Activated CD8-positive, alpha-beta T cell treated with anti-CD3 and anti-CD28 coated beads for 36 hours (primary cell): ENCODE measurements at regions of chr7 and their contacts with region 1.

Region 1: GRCh38 chr7:5665094-5666025 is 116.1 kb downstream of the RNF216 start:
- DNase-seq: peak; percentile 77
- ATAC-seq: peak; percentile 80
- H3K4me3 Mint-ChIP-seq: no peak overlapping the region
- H3K27ac Mint-ChIP-seq: peak overlapping the region; percentile 20
- H3K4me1 Mint-ChIP-seq: peaks cover 31% of the 10 kb centered on the region
- H3K27me3 Mint-ChIP-seq: no peaks in the 10 kb centered on the region
- CTCF ChIP-seq: peak; percentile 81

Region 2: GRCh38 chr7:5541087-5541992 is 124.0 kb before region 1 on chr7:
- CTCF ChIA-PET with region 1: no interaction called
- POLR2A ChIA-PET with region 1: no interaction called
- intact Hi-C with region 1: no loop called
- DNase-seq: no peak
- ATAC-seq: no peak
- H3K4me3 Mint-ChIP-seq: no peak overlapping the region
- H3K27ac Mint-ChIP-seq: no peak overlapping the region
- H3K4me1 Mint-ChIP-seq: peaks cover 12% of the 10 kb centered on the region
- H3K27me3 Mint-ChIP-seq: no peaks in the 10 kb centered on the region
- CTCF ChIP-seq: no peak

Region 3: DNA sequence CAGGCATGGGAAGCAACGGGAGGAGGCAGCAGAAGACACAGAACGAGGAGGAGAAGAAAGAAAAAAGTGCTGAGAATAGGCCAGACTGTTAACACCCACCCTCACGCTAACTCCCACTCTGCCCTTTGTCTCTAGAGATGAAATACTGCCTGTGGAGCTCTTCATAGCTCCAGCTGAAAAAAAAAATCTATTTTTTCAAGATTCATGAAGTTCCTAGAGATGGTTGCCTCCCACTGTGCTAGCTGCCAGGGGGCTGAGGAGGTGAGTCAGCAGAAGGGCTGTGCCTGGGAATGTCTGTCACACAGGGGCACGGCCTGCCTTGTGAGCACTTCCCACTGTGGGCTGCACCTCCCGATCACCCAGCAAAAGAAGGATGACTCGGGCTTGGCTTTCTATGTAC is 28.4 kb before region 1 on chr7:
- CTCF ChIA-PET with region 1: interaction called, 23 read pairs
- POLR2A ChIA-PET with region 1: no interaction called
- intact Hi-C with region 1: no loop called
- DNase-seq: no peak
- ATAC-seq: no peak
- H3K4me3 Mint-ChIP-seq: no peak overlapping the region
- H3K27ac Mint-ChIP-seq: no peak overlapping the region
- H3K4me1 Mint-ChIP-seq: peaks cover 19% of the 10 kb centered on the region
- H3K27me3 Mint-ChIP-seq: no peaks in the 10 kb centered on the region
- CTCF ChIP-seq: no peak

Region 4: GRCh38 chr7:5653661-5654060 is 11.7 kb before region 1 on chr7:
- CTCF ChIA-PET with region 1: interaction called, 11 read pairs
- POLR2A ChIA-PET with region 1: no interaction called
- intact Hi-C with region 1: no loop called
- DNase-seq: no peak
- ATAC-seq: no peak
- H3K4me3 Mint-ChIP-seq: no peak overlapping the region
- H3K27ac Mint-ChIP-seq: peak overlapping the region; percentile 80
- H3K4me1 Mint-ChIP-seq: peaks cover 10% of the 10 kb centered on the region
- H3K27me3 Mint-ChIP-seq: no peaks in the 10 kb centered on the region
- CTCF ChIP-seq: no peak

Region 5: DNA sequence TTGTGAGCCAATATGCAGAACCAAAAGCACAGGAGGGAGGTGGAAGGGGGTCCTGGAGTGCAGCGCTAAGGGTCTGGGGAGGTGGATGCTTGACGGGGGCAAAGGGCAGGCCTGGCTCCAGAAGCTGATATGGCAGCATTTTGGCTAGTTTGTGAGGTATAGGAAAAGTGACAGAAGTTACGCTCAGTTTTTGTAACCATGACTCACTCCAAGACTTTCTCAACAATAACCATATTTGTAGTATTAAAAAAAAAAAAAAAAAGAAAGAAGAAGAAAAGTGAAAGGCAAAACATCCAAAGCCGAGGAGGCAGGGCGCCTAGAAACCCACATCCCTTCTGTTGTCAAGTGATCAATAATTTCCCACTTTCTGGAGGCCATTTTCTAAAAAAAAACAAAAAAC is 23.8 kb after region 1 on chr7:
- CTCF ChIA-PET with region 1: interaction called, 20 read pairs
- POLR2A ChIA-PET with region 1: no interaction called
- intact Hi-C with region 1: no loop called
- DNase-seq: peak; percentile 87
- ATAC-seq: peak; percentile 65
- H3K4me3 Mint-ChIP-seq: peak overlapping the region; percentile 57
- H3K27ac Mint-ChIP-seq: peak overlapping the region; percentile 97
- H3K4me1 Mint-ChIP-seq: peaks cover 93% of the 10 kb centered on the region
- H3K27me3 Mint-ChIP-seq: no peaks in the 10 kb centered on the region
- CTCF ChIP-seq: no peak

Region 6: GRCh38 chr7:5704534-5704922 is 39.2 kb after region 1 on chr7:
- CTCF ChIA-PET with region 1: interaction called, 45 read pairs
- POLR2A ChIA-PET with region 1: interaction called, 6 read pairs
- intact Hi-C with region 1: loop called (anchors 5 kb)
- DNase-seq: peak; percentile 87
- ATAC-seq: no peak
- H3K4me3 Mint-ChIP-seq: no peak overlapping the region
- H3K27ac Mint-ChIP-seq: no peak overlapping the region
- H3K4me1 Mint-ChIP-seq: peaks cover 80% of the 10 kb centered on the region
- H3K27me3 Mint-ChIP-seq: no peaks in the 10 kb centered on the region
- CTCF ChIP-seq: peak; percentile 85